ENCODE measurements at regions of chr14 and their contacts with region 1.

Region 1: DNA sequence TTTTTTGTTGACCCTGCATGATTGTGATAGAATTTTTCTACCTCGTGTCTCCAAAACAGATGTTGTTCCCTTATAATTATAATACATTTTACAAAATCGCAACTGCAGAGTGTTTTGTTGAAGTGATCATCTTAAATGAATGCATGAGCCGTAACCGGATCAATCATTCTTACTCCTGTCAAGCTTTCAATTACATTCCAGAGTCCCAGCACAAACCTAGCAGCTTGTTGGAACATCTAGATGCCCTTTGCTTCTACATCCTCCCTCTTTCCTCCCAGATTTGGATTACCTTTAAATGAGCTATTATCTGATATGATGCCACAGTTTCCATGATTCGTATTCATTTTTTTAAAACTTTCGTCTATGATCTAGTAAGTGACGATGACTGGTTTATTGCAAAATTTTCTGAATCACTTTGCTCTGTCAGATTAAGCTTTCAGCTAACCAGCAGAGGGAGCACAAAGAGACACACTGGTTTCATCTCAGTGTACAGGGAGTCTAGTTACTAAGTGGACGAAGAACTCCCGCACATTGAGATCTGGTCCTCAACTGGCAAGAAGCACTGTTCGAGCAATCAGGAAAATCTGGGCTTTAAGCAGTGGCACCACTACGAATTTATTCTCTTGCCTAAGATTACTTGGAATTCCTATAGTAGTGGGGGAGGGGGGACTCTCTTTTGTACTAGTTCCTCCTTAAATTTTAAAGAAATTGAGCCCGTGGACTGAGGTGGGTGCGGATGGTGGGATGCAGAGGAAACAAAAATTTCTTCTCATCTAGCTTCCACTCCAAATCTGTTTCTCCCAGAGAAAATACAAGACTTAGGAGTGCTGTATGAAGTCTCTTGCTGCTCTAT is 40.9 kb downstream of the TSHR start:
- DNase-seq: peak; percentile 86
- H3K4me3 Mint-ChIP-seq: no peak overlapping the region
- H3K27ac Mint-ChIP-seq: no peak overlapping the region
- H3K4me1 Mint-ChIP-seq: no peaks in the 10 kb centered on the region
- H3K27me3 Mint-ChIP-seq: peaks cover 65% of the 10 kb centered on the region
- CTCF ChIP-seq: peak; percentile 63

Region 2: GRCh38 chr14:80973931-80974641 is 22.2 kb before region 1 on chr14:
- CTCF ChIA-PET with region 1: interaction called, 10 read pairs
- POLR2A ChIA-PET with region 1: interaction called, 4 read pairs
- intact Hi-C with region 1: no loop called
- DNase-seq: peak; percentile 16
- H3K4me3 Mint-ChIP-seq: no peak overlapping the region
- H3K27ac Mint-ChIP-seq: no peak overlapping the region
- H3K4me1 Mint-ChIP-seq: no peaks in the 10 kb centered on the region
- H3K27me3 Mint-ChIP-seq: peaks cover 50% of the 10 kb centered on the region
- CTCF ChIP-seq: no peak

Region 3: GRCh38 chr14:81062816-81063215 is 66.5 kb after region 1 on chr14:
- CTCF ChIA-PET with region 1: interaction called, 9 read pairs
- POLR2A ChIA-PET with region 1: no interaction called
- intact Hi-C with region 1: loop called (anchors 2 kb)
- DNase-seq: peak; percentile 22
- H3K4me3 Mint-ChIP-seq: no peak overlapping the region
- H3K27ac Mint-ChIP-seq: no peak overlapping the region
- H3K4me1 Mint-ChIP-seq: no peaks in the 10 kb centered on the region
- H3K27me3 Mint-ChIP-seq: no peaks in the 10 kb centered on the region
- CTCF ChIP-seq: no peak

Region 4: DNA sequence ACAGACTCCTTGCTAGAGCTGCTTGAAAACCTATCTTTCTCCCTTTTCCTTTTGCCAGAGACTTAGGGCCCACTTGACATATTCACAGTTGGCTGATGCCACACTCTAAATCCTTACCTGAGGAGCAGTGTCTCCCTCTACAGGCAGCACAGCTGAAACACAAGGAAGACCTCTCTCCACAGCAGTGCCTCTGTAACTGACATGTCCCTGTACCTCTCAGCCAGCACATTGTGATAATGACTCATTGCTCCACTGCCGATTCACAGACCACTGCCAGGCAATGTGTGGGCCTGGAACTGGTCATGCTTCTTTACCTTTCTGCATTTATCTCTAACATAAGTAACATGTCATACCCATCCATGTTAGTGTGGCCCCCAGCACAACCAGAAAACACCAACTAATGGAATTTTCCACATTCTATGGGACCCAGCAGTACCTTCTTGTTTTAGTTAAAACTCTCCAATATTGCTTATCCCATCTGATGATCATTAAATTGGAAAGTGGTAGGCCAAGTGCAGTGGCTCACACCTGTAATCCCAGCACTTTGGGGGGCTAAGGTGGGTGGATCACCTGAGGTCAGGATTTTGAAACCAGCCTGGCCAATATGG is 168.0 kb after region 1 on chr14:
- CTCF ChIA-PET with region 1: interaction called, 76 read pairs
- POLR2A ChIA-PET with region 1: interaction called, 8 read pairs
- intact Hi-C with region 1: loop called (anchors 1 kb)
- DNase-seq: peak; percentile 87
- H3K4me3 Mint-ChIP-seq: no peak overlapping the region
- H3K27ac Mint-ChIP-seq: no peak overlapping the region
- H3K4me1 Mint-ChIP-seq: peaks cover 14% of the 10 kb centered on the region
- H3K27me3 Mint-ChIP-seq: no peaks in the 10 kb centered on the region
- CTCF ChIP-seq: peak; percentile 69

Region 5: GRCh38 chr14:81176241-81176640 is 180.0 kb after region 1 on chr14:
- CTCF ChIA-PET with region 1: interaction called, 60 read pairs
- POLR2A ChIA-PET with region 1: interaction called, 17 read pairs
- intact Hi-C with region 1: no loop called
- DNase-seq: no peak
- H3K4me3 Mint-ChIP-seq: no peak overlapping the region
- H3K27ac Mint-ChIP-seq: no peak overlapping the region
- H3K4me1 Mint-ChIP-seq: no peaks in the 10 kb centered on the region
- H3K27me3 Mint-ChIP-seq: no peaks in the 10 kb centered on the region
- CTCF ChIP-seq: no peak

Region 6: GRCh38 chr14:81256289-81256960 is 260.1 kb after region 1 on chr14:
- CTCF ChIA-PET with region 1: no interaction called
- POLR2A ChIA-PET with region 1: no interaction called
- intact Hi-C with region 1: no loop called
- DNase-seq: no peak
- H3K4me3 Mint-ChIP-seq: no peak overlapping the region
- H3K27ac Mint-ChIP-seq: no peak overlapping the region
- H3K4me1 Mint-ChIP-seq: no peaks in the 10 kb centered on the region
- H3K27me3 Mint-ChIP-seq: no peaks in the 10 kb centered on the region
- CTCF ChIP-seq: no peak

Region 7: GRCh38 chr14:81324018-81324417 is 327.7 kb after region 1 on chr14:
- CTCF ChIA-PET with region 1: no interaction called
- POLR2A ChIA-PET with region 1: no interaction called
- intact Hi-C with region 1: no loop called
- DNase-seq: peak; percentile 89
- H3K4me3 Mint-ChIP-seq: peak overlapping the region; percentile 70
- H3K27ac Mint-ChIP-seq: peak overlapping the region; percentile 14
- H3K4me1 Mint-ChIP-seq: peaks cover 28% of the 10 kb centered on the region
- H3K27me3 Mint-ChIP-seq: no peaks in the 10 kb centered on the region
- CTCF ChIP-seq: no peak

Region 8: DNA sequence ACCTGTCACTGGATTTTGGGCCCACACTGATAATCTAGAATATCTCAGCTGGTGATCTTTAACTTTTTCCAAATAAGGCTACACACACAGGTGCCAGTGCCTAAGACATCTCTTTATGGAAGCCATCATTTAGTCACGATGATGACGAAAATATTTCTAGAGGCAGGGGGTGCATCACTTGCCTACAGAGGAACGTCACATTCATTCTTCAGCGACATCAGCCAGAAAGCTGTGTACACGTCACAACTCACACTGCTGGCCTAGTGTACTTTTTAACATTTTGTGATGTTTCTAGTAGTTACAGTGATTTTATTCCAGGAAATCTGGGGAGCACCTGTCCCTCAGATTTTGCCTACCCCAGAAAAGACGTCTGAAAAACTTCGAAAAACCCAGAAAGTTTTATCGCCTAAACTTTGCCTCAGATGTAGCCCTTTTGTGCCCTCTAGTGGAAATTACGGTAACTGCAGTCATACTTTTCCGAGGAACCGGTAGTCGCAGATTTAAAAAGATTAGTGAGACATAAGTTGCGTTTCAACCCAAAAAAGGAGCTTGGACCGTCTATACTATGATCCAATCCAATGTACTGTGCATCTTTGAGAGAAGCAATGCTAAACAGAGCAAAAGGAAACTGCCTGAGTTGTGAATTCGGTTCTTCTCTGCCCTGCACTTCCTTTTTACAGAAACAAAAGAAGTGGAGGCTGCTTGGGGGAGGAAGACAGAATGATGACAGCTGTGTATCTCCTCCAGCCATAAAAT is 468.1 kb after region 1 on chr14:
- CTCF ChIA-PET with region 1: interaction called, 28 read pairs
- POLR2A ChIA-PET with region 1: interaction called, 3 read pairs
- intact Hi-C with region 1: loop called (anchors 1 kb)
- DNase-seq: peak; percentile 75
- H3K4me3 Mint-ChIP-seq: peak overlapping the region; percentile 40
- H3K27ac Mint-ChIP-seq: no peak overlapping the region
- H3K4me1 Mint-ChIP-seq: no peaks in the 10 kb centered on the region
- H3K27me3 Mint-ChIP-seq: no peaks in the 10 kb centered on the region
- CTCF ChIP-seq: peak; percentile 67